Gastrocnemius medialis (tissue), 4 donors: ENCODE measurements at regions of chr1 and their contacts with region 1.

Region 1: GRCh38 chr1:155981266-155982088 is 3.1 kb upstream of the ARHGEF2 start:
- DNase-seq: no peak
- ATAC-seq: no peak
- H3K4me3 ChIP-seq: no peak overlapping the region
- H3K27ac ChIP-seq: peak overlapping the region; percentile 87 to 97 (median 93)
- H3K4me1 ChIP-seq: peaks cover 53 to 54% of the 10 kb centered on the region in 2 donors
- H3K27me3 ChIP-seq: no peaks in the 10 kb centered on the region
- CTCF ChIP-seq: no peak
- POLR2A ChIP-seq: no peak

Region 2: GRCh38 chr1:155961937-155962336 is 19.5 kb before region 1 on chr1:
- in situ Hi-C with region 1: no loop called
- intact Hi-C with region 1: loop called (anchors 2 kb)
- DNase-seq: peak in 1 of 2 donors; percentile 67
- ATAC-seq: peak; percentile 40 to 52
- H3K4me3 ChIP-seq: no peak overlapping the region
- H3K27ac ChIP-seq: peak overlapping the region; percentile 57 to 77 (median 74)
- H3K4me1 ChIP-seq: peaks cover 28 to 42% of the 10 kb centered on the region in 2 donors
- H3K27me3 ChIP-seq: no peaks in the 10 kb centered on the region
- CTCF ChIP-seq: peak in 3 of 5 experiments; percentile 17 to 42 (median 30)
- POLR2A ChIP-seq: no peak

Region 3: GRCh38 chr1:156001682-156002171 is 20.2 kb after region 1 on chr1:
- in situ Hi-C with region 1: no loop called
- intact Hi-C with region 1: no loop called
- DNase-seq: no peak
- ATAC-seq: no peak
- H3K4me3 ChIP-seq: no peak overlapping the region
- H3K27ac ChIP-seq: no peak overlapping the region
- H3K4me1 ChIP-seq: no peaks in the 10 kb centered on the region
- H3K27me3 ChIP-seq: no peaks in the 10 kb centered on the region
- CTCF ChIP-seq: no peak
- POLR2A ChIP-seq: no peak